Astrocyte of the cerebellum (primary cell): ENCODE measurements at regions of chr1 and their contacts with region 1.

Region 1: GRCh38 chr1:25780311-25781129 is 19.5 kb upstream of the SELENON start:
- DNase-seq: no peak
- H3K4me3 ChIP-seq: no peak overlapping the region
- CTCF ChIP-seq: no peak

Region 2: GRCh38 chr1:25520446-25521061 is 260.0 kb before region 1 on chr1:
- in situ Hi-C with region 1: loop called (anchors 10 kb)
- DNase-seq: peak; percentile 53
- H3K4me3 ChIP-seq: no peak overlapping the region
- CTCF ChIP-seq: peak; percentile 73

Region 3: GRCh38 chr1:25695090-25695770 is 85.3 kb before region 1 on chr1:
- in situ Hi-C with region 1: loop called (anchors 10 kb)
- DNase-seq: peak; percentile 86
- H3K4me3 ChIP-seq: no peak overlapping the region
- CTCF ChIP-seq: peak; percentile 27